ENCODE measurements at regions of chr1 and their contacts with region 1.

Region 1: DNA sequence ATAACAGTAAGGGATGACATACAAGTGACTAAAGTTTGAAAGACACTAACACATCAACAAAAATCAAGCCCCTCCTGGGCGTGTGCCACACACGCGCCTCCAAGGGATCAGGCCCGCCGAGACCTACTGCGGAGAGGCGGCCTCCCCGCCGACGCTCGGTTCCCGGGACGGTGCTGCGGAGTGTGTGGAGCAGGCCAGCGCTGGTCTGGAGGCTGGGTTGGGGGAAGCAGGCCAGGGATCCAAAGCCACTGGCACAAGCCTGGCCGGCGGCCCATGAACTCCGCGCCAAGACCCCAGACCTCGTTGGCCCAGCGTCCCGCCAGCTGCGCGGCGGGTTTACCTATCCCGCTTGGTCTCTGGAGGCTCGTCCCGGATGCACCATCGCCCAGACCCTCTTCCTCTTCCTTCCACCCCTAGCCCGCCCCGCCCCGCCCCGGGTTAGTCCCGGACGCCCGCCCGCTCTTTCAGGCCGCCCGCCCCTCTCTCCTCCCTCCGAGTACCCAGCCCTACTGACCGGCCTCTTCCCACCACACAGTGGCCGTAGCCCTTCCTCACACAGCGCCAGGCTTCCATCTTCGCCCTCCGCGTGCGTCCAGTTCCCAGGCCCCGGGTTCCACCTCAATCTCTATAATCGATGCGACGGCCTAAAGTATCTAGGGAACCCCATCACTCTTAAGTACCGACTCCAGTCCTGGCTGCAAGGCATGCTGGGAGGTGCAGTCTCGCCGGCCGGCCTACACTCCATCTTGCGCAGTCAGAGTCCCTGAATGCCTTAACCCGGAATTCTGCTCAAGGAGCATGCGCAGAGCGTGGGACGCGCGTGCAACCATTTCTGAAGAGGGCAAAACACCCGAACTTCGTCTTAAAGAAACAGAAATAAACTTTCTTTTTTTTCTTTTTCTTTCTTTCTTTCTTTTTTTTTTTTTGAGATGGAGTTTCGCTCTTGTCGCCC is at the start of gene ANGEL2:
- DNase-seq: peak; percentile 92 to 98 (median 96)
- H3K4me3 ChIP-seq: peak within 1 kb of the TSS; percentile 55 to 79
- H3K4me3 Mint-ChIP-seq: peak within 1 kb of the TSS; percentile 96 to 100 (median 100)
- H3K27ac ChIP-seq: peak within 1 kb of the TSS; percentile 85
- H3K27ac Mint-ChIP-seq: peak within 1 kb of the TSS; percentile 98 to 100 (median 100)
- H3K4me1 ChIP-seq: peaks cover 40% of the 10 kb centered on the region
- H3K4me1 Mint-ChIP-seq: peaks cover 27 to 44% (median 34%) of the 10 kb centered on the region in 4 donors
- H3K27me3 ChIP-seq: no peaks in the 10 kb centered on the region
- H3K27me3 Mint-ChIP-seq: no peaks in the 10 kb centered on the region
- total RNA-seq, gene ANGEL2: 79.8 to 81.4 TPM

Region 2: DNA sequence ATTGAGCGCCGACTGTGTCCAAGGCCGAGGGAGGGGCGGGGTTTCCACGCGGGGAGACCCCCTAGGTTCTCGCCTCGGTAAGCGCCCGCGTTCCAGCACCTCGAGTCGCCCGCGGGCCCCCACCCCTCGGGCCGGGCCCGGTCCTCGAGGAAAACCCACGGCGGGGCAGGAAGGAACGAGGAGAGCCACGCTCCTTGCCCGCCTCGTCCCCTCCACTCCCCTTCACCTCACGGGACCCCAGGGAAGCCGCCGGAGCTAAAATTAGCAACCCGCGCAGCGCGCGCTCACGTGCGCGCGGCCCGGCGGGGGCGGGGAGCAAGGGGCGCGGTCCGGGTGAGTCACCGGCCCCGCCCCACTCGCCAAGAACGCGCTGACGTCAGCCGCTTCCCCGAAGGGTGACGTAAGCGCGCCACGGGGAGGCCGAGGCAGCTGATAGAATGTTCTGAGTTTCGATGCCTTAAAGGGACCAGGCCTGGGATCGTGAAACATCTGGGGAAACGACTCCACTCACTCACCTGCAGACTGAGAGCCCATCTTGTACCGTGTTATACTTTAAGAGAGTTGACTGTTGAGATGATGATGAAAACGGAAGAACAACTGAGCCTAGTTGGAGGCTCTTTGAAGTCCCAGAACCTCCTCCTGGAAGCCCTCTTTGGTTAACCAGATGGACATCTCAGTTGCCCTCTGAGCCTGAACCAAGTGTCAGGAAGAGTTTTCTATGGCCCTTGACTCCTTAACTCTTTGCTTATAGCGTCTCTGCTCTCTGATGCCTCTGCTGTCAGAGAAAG is 456.5 kb before region 1 on chr1:
- CTCF ChIA-PET with region 1: no interaction called
- POLR2A ChIA-PET with region 1: no interaction called
- intact Hi-C with region 1: loop called (anchors 1 kb)
- DNase-seq: peak; percentile 90 to 92 (median 91)
- H3K4me3 ChIP-seq: peak overlapping the region in 1 of 2 donors; percentile 64
- H3K4me3 Mint-ChIP-seq: peak overlapping the region; percentile 83 to 93 (median 86)
- H3K27ac ChIP-seq: peak overlapping the region; percentile 79
- H3K27ac Mint-ChIP-seq: peak overlapping the region; percentile 81 to 100 (median 99)
- H3K4me1 ChIP-seq: peaks cover 11% of the 10 kb centered on the region
- H3K4me1 Mint-ChIP-seq: peaks cover 2 to 16% (median 8%) of the 10 kb centered on the region in 4 donors
- H3K27me3 ChIP-seq: no peaks in the 10 kb centered on the region
- H3K27me3 Mint-ChIP-seq: peaks cover 4% of the 10 kb centered on the region in 2 donors

Region 3: DNA sequence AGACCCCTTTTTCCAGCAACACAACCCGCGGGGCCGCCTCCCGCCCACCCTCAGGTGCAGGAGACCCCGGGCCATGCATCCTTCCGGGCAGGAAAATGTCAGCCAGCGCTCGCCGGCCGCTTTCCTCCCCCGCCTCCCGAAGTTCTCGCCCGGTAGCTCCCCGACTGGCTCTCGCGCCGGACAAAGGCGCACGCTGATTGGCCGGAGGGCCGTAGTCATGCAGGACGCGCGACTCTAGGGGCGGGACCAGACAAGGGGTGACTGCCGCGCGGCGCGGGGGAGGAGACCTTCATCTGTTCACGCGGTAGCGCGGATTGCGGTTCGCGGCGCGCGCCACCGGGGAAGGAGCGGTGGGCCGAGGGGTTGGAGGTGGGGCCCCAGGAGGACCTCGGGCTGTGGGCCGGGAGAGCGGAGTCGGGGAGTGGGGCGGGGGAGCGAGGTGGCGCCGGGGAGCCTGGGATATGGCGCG is 157.3 kb before region 1 on chr1 and contains the start of gene FLVCR1:
- CTCF ChIA-PET with region 1: no interaction called
- POLR2A ChIA-PET with region 1: interaction called, 3 read pairs
- intact Hi-C with region 1: loop called (anchors 2 kb)
- DNase-seq: peak; percentile 89 to 94 (median 90)
- H3K4me3 ChIP-seq: peak within 1 kb of the TSS; percentile 58 to 75
- H3K4me3 Mint-ChIP-seq: peak within 1 kb of the TSS in 7 of 8 donors; percentile 58 to 98 (median 95)
- H3K27ac ChIP-seq: peak within 1 kb of the TSS; percentile 71
- H3K27ac Mint-ChIP-seq: peak within 1 kb of the TSS; percentile 91 to 97 (median 93)
- H3K4me1 ChIP-seq: peaks cover 44% of the 10 kb centered on the region
- H3K4me1 Mint-ChIP-seq: peaks cover 11 to 20% (median 18%) of the 10 kb centered on the region in 4 donors
- H3K27me3 ChIP-seq: no peaks in the 10 kb centered on the region
- H3K27me3 Mint-ChIP-seq: no peaks in the 10 kb centered on the region
- total RNA-seq, gene FLVCR1: 10.8 to 12.7 TPM

Region 4: GRCh38 chr1:213051127-213051880 is 35.9 kb after region 1 on chr1 and contains the start of gene RPS6KC1:
- CTCF ChIA-PET with region 1: interaction called, 3 read pairs
- POLR2A ChIA-PET with region 1: interaction called, 16 read pairs
- intact Hi-C with region 1: loop called (anchors 1 kb)
- DNase-seq: peak; percentile 73 to 83 (median 79)
- H3K4me3 ChIP-seq: peak within 1 kb of the TSS; percentile 61 to 97
- H3K4me3 Mint-ChIP-seq: peak within 1 kb of the TSS; percentile 95 to 99 (median 96)
- H3K27ac ChIP-seq: peak within 1 kb of the TSS; percentile 61
- H3K27ac Mint-ChIP-seq: peak within 1 kb of the TSS; percentile 74 to 97 (median 95)
- H3K4me1 ChIP-seq: peaks cover 18% of the 10 kb centered on the region
- H3K4me1 Mint-ChIP-seq: peaks cover 24 to 36% (median 29%) of the 10 kb centered on the region in 4 donors
- H3K27me3 ChIP-seq: no peaks in the 10 kb centered on the region
- H3K27me3 Mint-ChIP-seq: peaks cover 8 to 18% of the 10 kb centered on the region in 2 donors
- total RNA-seq, gene RPS6KC1: 13.2 to 15.4 TPM

Region 5: GRCh38 chr1:214281021-214281719 is 1265.8 kb after region 1 on chr1 and contains the start of gene SMYD2:
- CTCF ChIA-PET with region 1: no interaction called
- POLR2A ChIA-PET with region 1: no interaction called
- intact Hi-C with region 1: loop called (anchors 10 kb)
- DNase-seq: peak; percentile 67 to 77 (median 72)
- H3K4me3 ChIP-seq: peak within 1 kb of the TSS; percentile 79
- H3K4me3 Mint-ChIP-seq: peak within 1 kb of the TSS; percentile 89 to 96 (median 92)
- H3K27ac ChIP-seq: peak within 1 kb of the TSS; percentile 68
- H3K27ac Mint-ChIP-seq: peak within 1 kb of the TSS; percentile 69 to 97 (median 93)
- H3K4me1 ChIP-seq: peaks cover 40% of the 10 kb centered on the region
- H3K4me1 Mint-ChIP-seq: peaks cover 34 to 56% (median 45%) of the 10 kb centered on the region in 4 donors
- H3K27me3 ChIP-seq: no peaks in the 10 kb centered on the region
- H3K27me3 Mint-ChIP-seq: no peaks in the 10 kb centered on the region
- total RNA-seq, gene SMYD2: 41.4 to 41.9 TPM